ENCODE measurements at regions of chr2 and their contacts with region 1.

Region 1: DNA sequence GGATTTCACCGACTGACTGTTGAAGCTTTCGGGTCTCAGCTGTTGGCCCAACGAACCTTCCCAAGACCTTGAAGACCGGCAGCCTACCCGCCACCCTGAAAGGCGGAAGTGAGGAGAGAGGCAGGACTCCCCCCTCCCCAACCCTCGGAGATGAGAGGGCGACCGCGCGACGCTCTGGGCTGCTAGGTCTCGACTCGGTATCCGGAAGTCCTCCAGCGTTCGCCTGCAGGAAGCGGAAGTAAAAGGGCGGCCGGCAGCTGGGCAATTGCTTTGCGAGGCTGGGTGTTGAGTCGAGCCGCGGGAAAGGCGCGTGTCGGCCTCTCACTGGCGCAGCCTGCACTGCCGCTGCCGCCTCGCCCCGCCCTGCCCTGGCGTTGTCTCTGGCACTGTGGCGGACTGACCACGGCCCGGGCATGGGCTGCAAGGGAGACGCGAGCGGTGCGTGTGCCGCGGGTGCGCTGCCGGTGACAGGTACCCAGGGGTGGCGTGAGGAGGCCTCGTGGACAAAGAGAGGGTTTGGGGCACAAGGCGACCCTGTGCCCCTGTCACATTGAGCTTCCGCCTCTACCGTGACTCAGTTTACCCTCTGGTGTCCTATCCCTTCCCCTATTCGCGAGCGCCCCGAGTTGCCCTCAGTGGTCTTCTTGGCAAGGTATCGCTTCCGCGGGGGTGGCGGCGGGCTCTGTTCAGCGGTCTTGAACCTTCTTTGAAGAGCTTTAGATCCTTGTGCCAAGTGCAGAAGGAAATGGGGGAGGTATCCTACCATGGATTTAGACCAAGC is at the start of gene UGGT1:
- DNase-seq: peak; percentile 92 to 97 (median 97)
- H3K4me3 ChIP-seq: peak within 1 kb of the TSS; percentile 48 to 96 (median 80)
- H3K27ac ChIP-seq: peak within 1 kb of the TSS; percentile 23 to 89 (median 71)
- H3K4me1 ChIP-seq: peaks cover 3 to 18% of the 10 kb centered on the region in 2 donors
- H3K27me3 ChIP-seq: no peaks in the 10 kb centered on the region
- CTCF ChIP-seq: peak in 1 of 6 experiments; percentile 3
- POLR2A ChIP-seq: peak; percentile 86 to 93
- total RNA-seq, gene UGGT1: 32.0 to 67.5 (median 43.2) TPM

Region 2: GRCh38 chr2:128027801-128028667 is 63.1 kb before region 1 on chr2 and contains the start of gene SAP130:
- intact Hi-C with region 1: loop called in 1 of 2 experiments (anchors 5 kb)
- DNase-seq: peak; percentile 98 to 99 (median 99)
- H3K4me3 ChIP-seq: peak within 1 kb of the TSS; percentile 53 to 97 (median 84)
- H3K27ac ChIP-seq: peak within 1 kb of the TSS; percentile 76 to 97 (median 93)
- H3K4me1 ChIP-seq: peaks cover 0 to 15% of the 10 kb centered on the region in 2 donors
- H3K27me3 ChIP-seq: no peaks in the 10 kb centered on the region
- CTCF ChIP-seq: peak in 1 of 6 experiments; percentile 12
- POLR2A ChIP-seq: peak; percentile 30 to 65
- total RNA-seq, gene SAP130: 7.9 to 22.7 (median 16.3) TPM

Region 3: DNA sequence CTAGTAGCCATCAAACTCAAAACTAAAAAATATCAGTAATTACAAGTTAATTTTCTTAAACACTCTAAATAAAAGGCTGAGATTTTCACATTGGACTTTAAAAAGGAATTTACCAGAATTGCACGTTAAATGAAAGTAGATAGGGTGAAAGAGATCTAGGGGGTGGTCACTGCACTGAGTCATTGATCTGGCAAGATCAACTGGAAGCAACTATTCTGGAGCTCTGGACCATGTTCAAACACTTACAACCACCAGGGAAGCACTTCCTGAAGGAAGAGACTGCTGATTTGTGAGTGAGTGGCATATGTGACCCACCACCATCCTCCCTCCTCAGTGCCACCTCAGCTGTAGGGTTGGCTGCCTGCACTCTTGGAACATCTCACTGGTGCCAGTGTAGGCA is 111.7 kb after region 1 on chr2:
- intact Hi-C with region 1: no loop called
- DNase-seq: no peak
- H3K4me3 ChIP-seq: no peak overlapping the region
- H3K27ac ChIP-seq: no peak overlapping the region
- H3K4me1 ChIP-seq: no peaks in the 10 kb centered on the region
- H3K27me3 ChIP-seq: no peaks in the 10 kb centered on the region
- CTCF ChIP-seq: no peak
- POLR2A ChIP-seq: no peak

Region 4: GRCh38 chr2:128215897-128216642 is 124.9 kb after region 1 on chr2:
- intact Hi-C with region 1: no loop called
- DNase-seq: no peak
- H3K4me3 ChIP-seq: no peak overlapping the region
- H3K27ac ChIP-seq: no peak overlapping the region
- H3K4me1 ChIP-seq: no peaks in the 10 kb centered on the region
- H3K27me3 ChIP-seq: no peaks in the 10 kb centered on the region
- CTCF ChIP-seq: no peak
- POLR2A ChIP-seq: no peak